Sigmoid colon (tissue), 7 donors: ENCODE measurements at regions of chr3 and their contacts with region 1.

Region 1: DNA sequence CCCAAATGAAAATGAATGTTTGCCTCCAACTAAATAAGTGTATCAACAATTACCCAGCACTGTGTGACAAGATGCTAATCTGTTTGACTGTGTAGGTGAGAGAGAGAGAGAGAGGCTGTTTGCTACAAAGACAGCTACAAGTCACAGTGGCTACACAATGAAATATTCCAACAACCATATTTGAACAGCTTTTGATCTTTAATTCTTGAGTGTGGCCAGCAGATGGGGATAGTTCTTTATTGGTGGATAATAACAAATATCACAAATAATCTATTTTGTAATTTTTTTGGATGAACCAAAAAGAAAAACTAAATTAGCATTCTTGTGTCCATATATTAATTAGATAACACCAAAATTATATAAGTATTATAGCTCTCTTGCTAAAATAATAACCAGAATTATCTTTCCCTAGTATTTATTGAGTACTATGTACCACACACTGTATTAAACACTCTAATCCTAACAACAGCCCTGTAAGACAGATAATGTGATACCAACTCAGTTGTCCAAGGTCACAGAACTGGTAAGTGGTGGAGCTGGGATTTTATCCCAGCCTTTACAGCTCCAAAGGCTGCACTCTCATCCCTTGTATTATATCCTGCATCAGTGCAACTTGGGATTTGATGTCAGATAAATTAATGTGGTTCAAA is 61.9 kb upstream of the C3orf80 start:
- DNase-seq: no peak
- H3K4me3 ChIP-seq: no peak overlapping the region
- H3K27ac ChIP-seq: no peak overlapping the region
- H3K4me1 ChIP-seq: peaks cover 0 to 6% (median 0%) of the 10 kb centered on the region in 4 donors
- H3K27me3 ChIP-seq: no peaks in the 10 kb centered on the region
- CTCF ChIP-seq: peak; percentile 29 to 52 (median 42)
- EP300 ChIP-seq: no peak
- POLR2A ChIP-seq: no peak

Region 2: DNA sequence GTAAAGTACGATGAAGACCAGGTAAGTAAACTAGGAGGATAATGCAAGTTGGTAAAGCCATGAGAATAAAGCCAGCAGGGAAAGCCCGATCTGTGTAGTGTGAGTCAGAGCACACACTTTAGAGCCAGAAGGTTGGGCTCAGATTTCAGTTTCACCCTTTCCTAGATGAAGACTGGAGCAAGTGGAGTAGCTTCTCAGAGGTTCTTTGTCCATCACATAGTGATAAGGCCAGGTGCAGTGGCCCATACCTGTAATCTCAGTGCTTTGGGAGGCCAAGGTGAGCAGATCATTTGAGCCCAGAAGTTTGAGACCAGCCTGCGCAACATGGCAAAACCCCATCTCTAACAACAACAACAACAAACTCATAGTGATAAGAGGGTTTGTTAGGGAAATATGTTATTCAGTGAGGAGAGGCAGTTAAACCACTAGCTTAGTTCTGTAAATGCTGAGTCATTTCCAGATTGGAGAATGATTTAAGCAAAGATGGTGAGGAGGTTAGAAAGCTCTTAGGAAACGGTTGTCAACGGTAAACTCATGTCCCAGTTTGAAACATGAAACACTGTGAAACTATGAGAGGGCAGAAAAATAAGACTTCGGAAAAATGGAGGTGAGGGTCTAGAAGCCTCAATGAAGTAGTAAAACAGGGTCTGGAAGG is 135.7 kb before region 1 on chr3:
- intact Hi-C with region 1: loop called (anchors 5 kb)
- DNase-seq: no peak
- H3K4me3 ChIP-seq: no peak overlapping the region
- H3K27ac ChIP-seq: no peak overlapping the region
- H3K4me1 ChIP-seq: no peaks in the 10 kb centered on the region
- H3K27me3 ChIP-seq: no peaks in the 10 kb centered on the region
- CTCF ChIP-seq: no peak
- EP300 ChIP-seq: no peak
- POLR2A ChIP-seq: no peak

Region 3: GRCh38 chr3:160099834-160100233 is 63.5 kb before region 1 on chr3:
- intact Hi-C with region 1: no loop called
- DNase-seq: no peak
- H3K4me3 ChIP-seq: no peak overlapping the region
- H3K27ac ChIP-seq: no peak overlapping the region
- H3K4me1 ChIP-seq: no peaks in the 10 kb centered on the region
- H3K27me3 ChIP-seq: no peaks in the 10 kb centered on the region
- CTCF ChIP-seq: no peak
- EP300 ChIP-seq: no peak
- POLR2A ChIP-seq: no peak

Region 4: GRCh38 chr3:160225176-160226025 is 62.0 kb after region 1 on chr3 and contains the start of gene C3orf80:
- intact Hi-C with region 1: loop called (anchors 2 kb)
- DNase-seq: peak; percentile 87
- H3K4me3 ChIP-seq: peak within 1 kb of the TSS; percentile 54 to 81 (median 79)
- H3K27ac ChIP-seq: peak within 1 kb of the TSS in 3 of 4 donors; percentile 82 to 85 (median 84)
- H3K4me1 ChIP-seq: peaks cover 0 to 52% (median 36%) of the 10 kb centered on the region in 4 donors
- H3K27me3 ChIP-seq: peaks cover 0 to 11% (median 0%) of the 10 kb centered on the region in 3 donors
- CTCF ChIP-seq: peak in 1 of 4 experiments; percentile 30
- EP300 ChIP-seq: no peak
- POLR2A ChIP-seq: peak in 1 of 2 donors; percentile 8
- total RNA-seq, gene C3orf80: 5.8 to 28.3 (median 23.4) TPM

Region 5: GRCh38 chr3:160343132-160343531 is 179.8 kb after region 1 on chr3:
- intact Hi-C with region 1: loop called (anchors 2 kb)
- DNase-seq: no peak
- H3K4me3 ChIP-seq: no peak overlapping the region
- H3K27ac ChIP-seq: no peak overlapping the region
- H3K4me1 ChIP-seq: no peaks in the 10 kb centered on the region
- H3K27me3 ChIP-seq: no peaks in the 10 kb centered on the region
- CTCF ChIP-seq: peak; percentile 10 to 50 (median 33)
- EP300 ChIP-seq: no peak
- POLR2A ChIP-seq: no peak

Region 6: DNA sequence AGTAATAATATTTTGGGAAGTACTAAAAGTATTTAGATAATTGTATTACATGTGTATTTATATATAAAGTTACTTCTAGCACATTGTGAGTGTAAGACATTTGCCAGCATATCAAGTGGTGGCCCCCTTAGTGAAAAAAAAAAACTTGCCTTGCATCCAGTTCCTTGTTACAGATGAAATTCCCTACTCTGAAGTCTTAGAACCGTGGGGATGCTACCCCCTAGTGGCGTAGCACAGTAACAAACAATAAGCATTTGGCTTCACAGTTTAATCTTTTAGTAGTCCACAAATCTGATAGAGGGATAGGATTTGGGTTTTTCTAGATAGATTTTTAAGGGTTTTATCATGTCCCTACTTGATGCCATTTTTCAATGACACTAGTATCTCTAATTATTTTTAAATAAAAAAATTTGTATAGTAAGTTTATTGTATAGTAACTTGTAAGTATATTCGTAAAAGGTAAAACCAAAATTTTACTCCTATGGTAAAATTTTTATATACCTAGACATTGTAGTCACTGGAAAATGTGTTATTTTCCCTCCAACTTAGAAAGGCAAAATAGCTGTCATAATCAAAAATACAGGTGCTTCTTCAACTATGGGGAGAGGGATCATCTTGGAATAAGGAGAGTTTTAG is 250.4 kb after region 1 on chr3:
- intact Hi-C with region 1: loop called (anchors 5 kb)
- DNase-seq: no peak
- H3K4me3 ChIP-seq: no peak overlapping the region
- H3K27ac ChIP-seq: no peak overlapping the region
- H3K4me1 ChIP-seq: no peaks in the 10 kb centered on the region
- H3K27me3 ChIP-seq: no peaks in the 10 kb centered on the region
- CTCF ChIP-seq: peak; percentile 54 to 91 (median 61)
- EP300 ChIP-seq: no peak
- POLR2A ChIP-seq: no peak